ENCODE measurements at regions of chr16 and their contacts with region 1.

Region 1: GRCh38 chr16:30183233-30184095 is at the start of gene CORO1A:
- DNase-seq: peak; percentile 71 to 90 (median 81)
- ATAC-seq: peak; percentile 45 to 55
- H3K4me3 Mint-ChIP-seq: peak within 1 kb of the TSS; percentile 96 to 100 (median 98)
- H3K27ac Mint-ChIP-seq: peak within 1 kb of the TSS; percentile 93 to 98 (median 98)
- H3K4me1 Mint-ChIP-seq: peaks cover 15 to 43% (median 36%) of the 10 kb centered on the region in 4 donors
- H3K27me3 Mint-ChIP-seq: no peaks in the 10 kb centered on the region
- polyA plus RNA-seq, gene CORO1A: 1,262 to 1,424 (median 1,364) TPM

Region 2: DNA sequence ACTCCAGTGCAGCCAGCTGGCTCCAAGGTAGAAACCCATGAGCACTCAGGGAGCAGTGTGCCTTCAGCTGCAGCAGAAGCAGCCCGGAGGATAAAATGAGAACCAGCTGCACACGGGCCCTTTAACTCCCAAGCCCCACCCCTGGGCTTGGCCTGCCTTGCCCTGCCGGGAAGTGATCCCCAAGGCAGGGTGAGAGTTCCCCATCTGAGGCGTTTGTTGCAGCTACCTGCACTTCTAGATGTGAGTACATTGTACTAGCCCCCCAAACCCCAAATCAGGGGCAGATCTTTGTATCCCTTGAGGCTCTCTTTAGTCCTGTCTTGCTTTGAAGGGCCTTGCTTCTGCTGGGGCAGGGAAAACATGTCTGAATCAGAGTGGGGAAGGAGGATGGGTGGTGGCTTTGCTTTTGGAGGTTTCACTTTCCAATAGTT is 363.2 kb before region 1 on chr16 and contains the start of gene MVP:
- POLR2A ChIA-PET with region 1: no interaction called
- DNase-seq: peak in 7 of 10 donors; percentile 33 to 62 (median 45)
- ATAC-seq: peak in 1 of 2 donors; percentile 8
- H3K4me3 Mint-ChIP-seq: peak within 1 kb of the TSS; percentile 94 to 99 (median 97)
- H3K27ac Mint-ChIP-seq: peak within 1 kb of the TSS; percentile 90 to 98 (median 95)
- H3K4me1 Mint-ChIP-seq: peaks cover 35 to 86% (median 77%) of the 10 kb centered on the region in 4 donors
- H3K27me3 Mint-ChIP-seq: peaks cover 0 to 1% (median 0%) of the 10 kb centered on the region in 5 donors
- polyA plus RNA-seq, gene MVP: 120 to 160 (median 134) TPM

Region 3: GRCh38 chr16:30005341-30006094 is 177.9 kb before region 1 on chr16:
- POLR2A ChIA-PET with region 1: no interaction called
- DNase-seq: peak in 9 of 10 donors; percentile 23 to 77 (median 39)
- ATAC-seq: peak; percentile 78 to 79
- H3K4me3 Mint-ChIP-seq: no peak overlapping the region
- H3K27ac Mint-ChIP-seq: peak overlapping the region in 2 of 10 donors; percentile 22 to 24
- H3K4me1 Mint-ChIP-seq: peaks cover 5 to 16% (median 10%) of the 10 kb centered on the region in 4 donors
- H3K27me3 Mint-ChIP-seq: peaks cover 0 to 12% (median 4%) of the 10 kb centered on the region in 5 donors

Region 4: DNA sequence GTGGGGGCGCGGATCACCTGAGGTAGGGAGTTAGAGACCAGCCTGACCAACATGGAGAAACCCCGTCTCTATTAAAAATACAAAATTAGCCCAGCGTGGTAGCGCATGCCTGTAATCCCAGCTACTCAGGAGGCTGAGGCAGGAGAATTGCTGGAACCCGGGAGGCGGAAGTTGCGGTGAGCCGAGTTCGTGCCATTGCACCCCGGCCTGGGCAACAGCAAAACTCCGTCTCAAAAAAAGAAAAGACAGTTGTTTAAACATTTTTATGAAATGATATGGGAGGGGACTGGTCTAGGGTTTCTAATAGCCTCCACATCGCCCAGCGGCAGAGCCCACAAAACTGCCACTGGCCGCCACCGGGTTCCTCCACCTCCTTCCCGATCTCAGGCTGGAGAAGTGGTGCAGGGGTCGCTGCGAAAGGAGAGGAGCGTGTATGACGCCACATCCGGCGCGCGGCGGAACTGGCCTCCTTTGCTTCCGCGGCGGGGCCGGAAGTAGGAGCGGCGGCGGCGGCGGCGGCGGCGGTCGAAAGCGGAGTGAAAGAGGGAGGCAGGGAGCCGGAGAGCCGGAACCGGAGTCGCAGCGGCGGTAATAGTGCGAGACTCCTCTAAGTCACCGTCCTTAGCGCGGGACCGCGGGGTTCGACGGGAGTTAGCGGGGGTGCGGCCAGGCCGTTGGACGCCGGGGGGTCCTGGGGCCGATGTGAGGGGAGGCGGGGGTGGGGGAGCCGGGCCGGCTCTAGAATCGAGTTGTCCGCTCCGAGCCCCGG is 107.8 kb before region 1 on chr16 and contains the start of gene PPP4C:
- POLR2A ChIA-PET with region 1: interaction called, 16 read pairs
- DNase-seq: peak; percentile 83 to 93 (median 89)
- ATAC-seq: peak; percentile 86 to 96
- H3K4me3 Mint-ChIP-seq: peak within 1 kb of the TSS; percentile 90 to 98 (median 96)
- H3K27ac Mint-ChIP-seq: peak within 1 kb of the TSS; percentile 94 to 98 (median 97)
- H3K4me1 Mint-ChIP-seq: peaks cover 18 to 54% (median 39%) of the 10 kb centered on the region in 4 donors
- H3K27me3 Mint-ChIP-seq: no peaks in the 10 kb centered on the region
- polyA plus RNA-seq, gene PPP4C: 153 to 199 (median 161) TPM

Region 5: GRCh38 chr16:30112197-30113030 is 71.0 kb before region 1 on chr16:
- POLR2A ChIA-PET with region 1: interaction called, 52 read pairs
- DNase-seq: peak in 8 of 10 donors; percentile 15 to 73 (median 48)
- ATAC-seq: peak in 1 of 2 donors; percentile 57
- H3K4me3 Mint-ChIP-seq: no peak overlapping the region
- H3K27ac Mint-ChIP-seq: no peak overlapping the region
- H3K4me1 Mint-ChIP-seq: peaks cover 6 to 19% (median 12%) of the 10 kb centered on the region in 4 donors
- H3K27me3 Mint-ChIP-seq: no peaks in the 10 kb centered on the region

Region 6: GRCh38 chr16:30131869-30132475 is 51.5 kb before region 1 on chr16:
- POLR2A ChIA-PET with region 1: interaction called, 22 read pairs
- DNase-seq: no peak
- ATAC-seq: no peak
- H3K4me3 Mint-ChIP-seq: peak overlapping the region in 1 of 10 donors; percentile 10
- H3K27ac Mint-ChIP-seq: peak overlapping the region in 3 of 10 donors; percentile 29 to 75 (median 46)
- H3K4me1 Mint-ChIP-seq: peaks cover 0 to 9% (median 3%) of the 10 kb centered on the region in 4 donors
- H3K27me3 Mint-ChIP-seq: no peaks in the 10 kb centered on the region

Region 7: GRCh38 chr16:30370444-30371247 is 187.2 kb after region 1 on chr16 and contains the start of gene TBC1D10B:
- POLR2A ChIA-PET with region 1: interaction called, 27 read pairs
- DNase-seq: peak; percentile 90 to 100 (median 99)
- ATAC-seq: peak; percentile 81 to 87
- H3K4me3 Mint-ChIP-seq: peak within 1 kb of the TSS; percentile 79 to 92 (median 88)
- H3K27ac Mint-ChIP-seq: peak within 1 kb of the TSS; percentile 87 to 97 (median 93)
- H3K4me1 Mint-ChIP-seq: peaks cover 30 to 56% (median 49%) of the 10 kb centered on the region in 4 donors
- H3K27me3 Mint-ChIP-seq: no peaks in the 10 kb centered on the region
- polyA plus RNA-seq, gene TBC1D10B: 6.6 to 10.5 (median 7.3) TPM

Region 8: DNA sequence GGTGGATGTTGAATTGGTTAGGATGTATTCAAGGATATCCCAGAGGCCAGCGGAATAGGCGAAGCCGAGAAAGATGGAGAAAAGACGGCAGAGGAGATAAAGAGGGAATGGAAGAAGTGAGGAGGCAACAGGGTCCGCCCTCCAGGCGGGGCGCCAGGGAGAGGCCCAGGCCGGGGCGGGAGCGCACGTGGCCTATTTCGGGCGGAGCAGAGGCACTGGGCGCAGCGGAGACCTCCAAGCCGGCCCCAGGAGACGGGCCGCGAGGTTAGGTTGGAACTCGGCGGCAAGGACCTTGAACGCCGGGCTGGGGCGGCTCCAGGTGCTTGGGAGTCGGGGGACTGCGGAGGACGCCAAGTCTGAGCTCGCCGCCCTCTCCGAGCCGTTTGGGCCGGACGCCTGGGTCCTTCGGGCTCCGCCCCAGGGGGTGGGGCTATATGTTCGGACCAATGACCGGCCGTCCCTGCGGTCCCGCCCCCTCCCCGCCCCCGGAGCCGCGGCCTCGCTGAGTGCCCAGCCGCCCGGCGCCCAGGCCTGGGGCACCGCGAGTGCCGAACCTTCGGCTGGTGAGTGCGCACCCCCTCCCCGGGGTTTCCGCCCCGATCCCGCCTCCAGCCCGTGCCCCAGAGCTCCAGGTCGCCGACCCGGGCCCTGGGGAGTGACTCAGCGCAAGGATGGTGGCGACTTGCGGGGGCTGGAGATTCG is 223.8 kb after region 1 on chr16 and contains the start of gene ZNF771:
- POLR2A ChIA-PET with region 1: interaction called, 16 read pairs
- DNase-seq: peak; percentile 65 to 92 (median 80)
- ATAC-seq: peak; percentile 81 to 87
- H3K4me3 Mint-ChIP-seq: peak within 1 kb of the TSS; percentile 88 to 100 (median 97)
- H3K27ac Mint-ChIP-seq: peak within 1 kb of the TSS; percentile 82 to 96 (median 95)
- H3K4me1 Mint-ChIP-seq: peaks cover 18 to 36% (median 29%) of the 10 kb centered on the region in 4 donors
- H3K27me3 Mint-ChIP-seq: peaks cover 0 to 3% (median 0%) of the 10 kb centered on the region in 5 donors
- polyA plus RNA-seq, gene ZNF771: 2.1 to 6.7 (median 3.8) TPM

Region 9: DNA sequence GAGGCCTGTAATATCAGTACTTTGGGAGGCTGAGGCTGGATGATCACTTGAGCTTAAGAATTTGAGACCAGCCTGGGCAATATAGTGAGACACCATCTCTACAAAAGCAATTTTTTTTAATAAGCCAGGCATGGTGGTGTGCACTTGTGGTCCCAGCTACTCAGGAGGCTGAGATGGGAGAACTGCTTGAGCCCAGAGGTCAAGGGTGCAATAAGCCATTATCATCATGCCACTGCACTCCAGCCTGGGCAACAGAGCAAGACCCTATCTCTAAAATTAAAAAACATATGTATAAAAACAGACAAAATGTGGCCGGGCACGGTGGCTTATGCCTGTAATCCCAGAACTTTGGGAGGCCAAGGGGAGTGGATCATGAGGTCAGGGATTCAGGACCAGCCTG is 405.2 kb after region 1 on chr16:
- POLR2A ChIA-PET with region 1: no interaction called
- DNase-seq: no peak
- ATAC-seq: no peak
- H3K4me3 Mint-ChIP-seq: no peak overlapping the region
- H3K27ac Mint-ChIP-seq: no peak overlapping the region
- H3K4me1 Mint-ChIP-seq: peaks cover 5 to 29% (median 20%) of the 10 kb centered on the region in 4 donors
- H3K27me3 Mint-ChIP-seq: peaks cover 0 to 1% (median 0%) of the 10 kb centered on the region in 5 donors

Region 10: DNA sequence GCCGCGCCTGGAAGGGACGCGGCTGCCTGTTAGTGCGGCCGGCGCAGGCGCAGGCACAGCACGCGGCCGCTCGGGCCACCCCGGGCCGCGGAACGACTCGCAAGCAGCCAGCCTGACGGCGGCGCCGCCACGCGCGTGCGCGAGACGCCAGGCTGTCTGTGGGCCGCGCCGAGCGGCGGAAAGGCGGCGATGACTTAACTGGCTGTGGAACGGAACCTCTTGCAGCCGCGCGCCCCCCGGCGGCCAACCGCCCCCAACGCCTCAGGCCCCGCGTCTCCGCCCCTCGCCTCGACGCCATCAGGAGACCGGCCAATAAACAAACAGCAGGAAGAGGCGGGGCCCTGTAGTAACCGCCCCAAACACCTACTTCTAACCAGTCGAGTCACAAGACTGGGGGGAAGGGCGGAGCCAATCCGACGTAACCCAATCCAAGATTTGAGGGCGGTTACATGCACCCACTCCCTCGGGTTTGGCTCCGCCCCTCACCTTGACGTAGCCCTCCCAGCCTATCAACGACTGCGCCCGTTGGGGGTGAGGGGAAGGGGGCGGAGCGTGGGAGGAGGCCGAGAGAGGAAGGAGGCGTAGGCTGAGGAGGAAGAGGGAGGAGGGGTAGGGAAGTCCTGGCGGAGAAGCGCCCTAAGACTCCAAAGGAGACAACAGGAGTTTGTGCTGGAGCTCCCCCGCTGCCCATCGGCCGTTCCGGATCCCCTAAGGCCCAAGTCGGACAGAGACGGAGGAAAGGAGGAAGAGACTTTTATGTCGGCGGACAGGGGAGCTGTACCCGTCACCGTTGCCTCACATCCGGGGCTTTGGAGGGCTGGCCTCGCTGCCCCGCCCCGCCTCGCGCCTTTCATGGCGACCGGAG is 474.6 kb after region 1 on chr16 and contains the start of gene FBRS:
- POLR2A ChIA-PET with region 1: interaction called, 11 read pairs
- DNase-seq: peak in 9 of 10 donors; percentile 99 to 100 (median 100)
- ATAC-seq: peak; percentile 66 to 72
- H3K4me3 Mint-ChIP-seq: peak within 1 kb of the TSS; percentile 90 to 99 (median 94)
- H3K27ac Mint-ChIP-seq: peak within 1 kb of the TSS; percentile 99 to 100 (median 100)
- H3K4me1 Mint-ChIP-seq: peaks cover 20 to 46% (median 42%) of the 10 kb centered on the region in 4 donors
- H3K27me3 Mint-ChIP-seq: no peaks in the 10 kb centered on the region
- polyA plus RNA-seq, gene FBRS: 3.2 to 8.0 (median 4.4) TPM